Panc1 (cell line): ENCODE measurements at regions of chr19 and their contacts with region 1.

Region 1: DNA sequence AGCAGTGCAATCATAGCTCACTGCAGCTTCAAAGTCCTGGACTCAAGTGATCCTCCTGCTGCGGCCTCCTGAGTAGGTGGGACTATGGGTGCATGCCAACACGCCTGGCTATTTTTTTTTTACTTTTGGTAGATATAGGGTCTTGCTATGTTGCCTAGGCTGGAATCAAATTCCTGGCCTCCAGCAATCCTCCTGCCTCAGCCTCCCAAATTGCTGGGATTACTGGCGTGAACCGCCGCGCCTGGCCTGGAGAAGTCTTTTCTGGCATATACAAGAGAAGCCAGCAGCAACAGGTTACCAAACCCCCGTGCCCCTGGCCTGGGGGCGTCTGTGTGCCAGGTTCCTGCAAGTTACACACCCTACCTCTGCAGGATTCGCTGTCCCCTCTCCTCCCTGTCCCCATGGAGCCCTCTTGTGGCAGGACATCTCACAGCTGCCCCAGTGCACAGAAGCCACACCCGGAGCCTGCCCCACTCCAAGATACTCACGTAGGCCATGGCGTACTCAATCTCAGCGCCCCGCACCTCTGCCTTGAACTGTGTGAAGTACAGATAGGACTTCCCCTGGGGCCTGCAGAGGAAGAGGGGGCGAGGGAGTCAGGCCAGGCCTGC is 9.9 kb downstream of the MYDGF start:
- DNase-seq: no peak
- ATAC-seq: peak; percentile 87
- H3K4me3 ChIP-seq: no peak overlapping the region
- H3K27ac ChIP-seq: no peak overlapping the region
- H3K4me1 ChIP-seq: no peaks in the 10 kb centered on the region
- H3K27me3 ChIP-seq: no peaks in the 10 kb centered on the region
- CTCF ChIP-seq: peak; percentile 72; the same call in 1 of the 2 replicates

Region 2: GRCh38 chr19:4510435-4511194 is 149.7 kb before region 1 on chr19:
- CTCF ChIA-PET with region 1: no interaction called
- POLR2A ChIA-PET with region 1: no interaction called
- in situ Hi-C with region 1: no loop called
- intact Hi-C with region 1: no loop called
- DNase-seq: no peak
- ATAC-seq: 0 out of 2 replicates have a peak, but pooled peaks have one; percentile 15
- H3K4me3 ChIP-seq: no peak overlapping the region
- H3K27ac ChIP-seq: no peak overlapping the region
- H3K4me1 ChIP-seq: no peaks in the 10 kb centered on the region
- H3K27me3 ChIP-seq: no peaks in the 10 kb centered on the region
- CTCF ChIP-seq: no peak

Region 3: GRCh38 chr19:4589579-4590410 is 70.5 kb before region 1 on chr19:
- CTCF ChIA-PET with region 1: no interaction called
- POLR2A ChIA-PET with region 1: no interaction called
- in situ Hi-C with region 1: no loop called
- intact Hi-C with region 1: no loop called
- DNase-seq: no peak
- ATAC-seq: peak; percentile 67
- H3K4me3 ChIP-seq: no peak overlapping the region
- H3K27ac ChIP-seq: no peak overlapping the region
- H3K4me1 ChIP-seq: no peaks in the 10 kb centered on the region
- H3K27me3 ChIP-seq: no peaks in the 10 kb centered on the region
- CTCF ChIP-seq: peak; percentile 68; the same call in 1 of the 2 replicates

Region 4: DNA sequence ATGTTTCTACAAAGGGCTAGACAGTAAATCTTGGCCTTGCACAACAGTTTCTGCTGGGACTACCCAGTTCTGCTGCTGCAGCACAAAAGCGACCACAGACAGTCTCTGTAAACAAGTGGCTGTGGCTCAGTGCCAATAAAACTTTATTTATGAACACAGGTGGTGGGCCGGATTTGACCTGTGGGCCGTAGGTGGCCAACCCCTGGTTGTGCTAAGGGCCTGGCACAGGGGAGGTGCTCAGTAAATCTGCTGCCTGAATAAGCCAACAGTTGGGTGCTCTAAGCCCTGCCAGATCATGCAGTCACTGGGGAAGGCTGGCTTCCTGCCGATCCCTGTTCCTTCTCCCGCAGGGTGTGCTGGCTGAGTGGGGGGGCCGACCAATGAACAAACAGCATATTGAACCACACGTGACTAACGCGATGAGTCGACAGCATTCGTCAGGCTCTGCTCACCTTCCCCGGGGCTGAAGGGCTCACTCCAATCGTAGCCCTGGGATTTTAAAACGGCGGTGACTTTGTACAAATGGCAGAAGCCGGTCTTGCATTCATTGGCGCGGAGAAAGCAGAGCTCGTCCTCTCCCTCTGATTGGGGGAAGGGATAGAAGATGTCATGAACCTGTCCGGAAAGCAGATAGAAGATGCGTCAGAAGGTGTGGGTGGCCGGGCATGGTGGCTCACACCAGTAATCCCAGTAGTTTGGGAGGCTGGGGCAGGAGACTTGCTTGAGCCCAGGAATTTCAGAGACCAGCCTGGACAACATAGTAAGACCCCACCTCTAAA is 34.1 kb after region 1 on chr19:
- CTCF ChIA-PET with region 1: no interaction called
- POLR2A ChIA-PET with region 1: interaction called, 10 read pairs
- in situ Hi-C with region 1: no loop called
- intact Hi-C with region 1: no loop called
- DNase-seq: peak; percentile 88
- ATAC-seq: peak; percentile 82
- H3K4me3 ChIP-seq: no peak overlapping the region
- H3K27ac ChIP-seq: peak overlapping the region; percentile 39
- H3K4me1 ChIP-seq: peaks cover 3% of the 10 kb centered on the region; the same call in 1 of the 2 replicates
- H3K27me3 ChIP-seq: no peaks in the 10 kb centered on the region
- CTCF ChIP-seq: no peak